ENCODE measurements at regions of chr22 and their contacts with region 1.

Region 1: GRCh38 chr22:30968924-30969539 is at the start of gene TUG1:
- DNase-seq: peak; percentile 88 to 98 (median 97)
- ATAC-seq: peak; percentile 96
- H3K4me3 ChIP-seq: peak within 1 kb of the TSS; percentile 59
- H3K4me3 Mint-ChIP-seq: peak within 1 kb of the TSS; percentile 90 to 96 (median 93)
- H3K27ac ChIP-seq: peak within 1 kb of the TSS; percentile 94
- H3K27ac Mint-ChIP-seq: peak within 1 kb of the TSS; percentile 90 to 98 (median 97)
- H3K4me1 ChIP-seq: peaks cover 22 to 23% of the 10 kb centered on the region in 2 donors
- H3K4me1 Mint-ChIP-seq: peaks cover 12 to 67% (median 58%) of the 10 kb centered on the region in 7 donors
- H3K27me3 ChIP-seq: no peaks in the 10 kb centered on the region
- H3K27me3 Mint-ChIP-seq: peaks cover 0 to 4% (median 0%) of the 10 kb centered on the region in 5 donors
- total RNA-seq, gene TUG1: 82.7 to 159 (median 113) TPM

Region 2: GRCh38 chr22:30435674-30436126 is 533.3 kb before region 1 on chr22:
- CTCF ChIA-PET with region 1: no interaction called
- POLR2A ChIA-PET with region 1: no interaction called
- intact Hi-C with region 1: loop called in 1 of 2 experiments (anchors 2 kb)
- DNase-seq: peak; percentile 45 to 97 (median 92)
- ATAC-seq: peak; percentile 94
- H3K4me3 ChIP-seq: peak overlapping the region; percentile 53
- H3K4me3 Mint-ChIP-seq: peak overlapping the region; percentile 57 to 90 (median 83)
- H3K27ac ChIP-seq: peak overlapping the region; percentile 99
- H3K27ac Mint-ChIP-seq: peak overlapping the region; percentile 88 to 100 (median 98)
- H3K4me1 ChIP-seq: peaks cover 16 to 21% of the 10 kb centered on the region in 2 donors
- H3K4me1 Mint-ChIP-seq: peaks cover 10 to 26% (median 23%) of the 10 kb centered on the region in 7 donors
- H3K27me3 ChIP-seq: peaks cover 3 to 6% of the 10 kb centered on the region in 2 donors
- H3K27me3 Mint-ChIP-seq: peaks cover 12 to 24% (median 18%) of the 10 kb centered on the region in 5 donors

Region 3: DNA sequence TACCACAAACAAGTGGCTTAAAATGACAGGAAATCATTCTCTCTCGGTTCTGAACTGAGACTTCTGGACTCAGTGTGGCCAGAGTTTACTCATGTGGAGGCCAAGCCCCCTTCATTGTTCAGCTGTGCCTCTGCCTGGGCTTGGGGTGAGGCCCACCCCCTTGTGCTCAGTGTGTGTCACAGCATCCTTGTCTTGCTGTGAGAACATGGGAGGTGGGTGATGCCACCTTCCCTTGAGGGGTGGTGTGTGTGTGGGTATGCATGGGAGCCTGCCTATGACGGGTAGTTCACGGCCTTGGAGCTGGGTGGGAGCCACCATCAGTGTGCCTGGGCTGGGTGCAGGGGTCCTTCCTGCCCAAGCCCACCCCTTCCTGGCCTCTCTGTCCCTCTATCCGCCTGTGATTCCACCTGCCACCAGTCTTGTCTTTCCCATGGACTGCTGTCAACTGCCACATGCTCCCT is 102.2 kb before region 1 on chr22:
- CTCF ChIA-PET with region 1: no interaction called
- POLR2A ChIA-PET with region 1: no interaction called
- intact Hi-C with region 1: no loop called
- DNase-seq: no peak
- ATAC-seq: no peak
- H3K4me3 ChIP-seq: no peak overlapping the region
- H3K4me3 Mint-ChIP-seq: no peak overlapping the region
- H3K27ac ChIP-seq: no peak overlapping the region
- H3K27ac Mint-ChIP-seq: no peak overlapping the region
- H3K4me1 ChIP-seq: no peaks in the 10 kb centered on the region
- H3K4me1 Mint-ChIP-seq: no peaks in the 10 kb centered on the region
- H3K27me3 ChIP-seq: no peaks in the 10 kb centered on the region
- H3K27me3 Mint-ChIP-seq: no peaks in the 10 kb centered on the region

Region 4: GRCh38 chr22:30920407-30920806 is 48.6 kb before region 1 on chr22:
- CTCF ChIA-PET with region 1: interaction called, 8 read pairs
- POLR2A ChIA-PET with region 1: interaction called, 28 read pairs
- intact Hi-C with region 1: loop called (anchors 1 kb)
- DNase-seq: peak; percentile 65 to 84 (median 78)
- ATAC-seq: peak; percentile 88
- H3K4me3 ChIP-seq: no peak overlapping the region
- H3K4me3 Mint-ChIP-seq: peak overlapping the region; percentile 62 to 89 (median 77)
- H3K27ac ChIP-seq: peak overlapping the region; percentile 43
- H3K27ac Mint-ChIP-seq: peak overlapping the region; percentile 5 to 90 (median 28)
- H3K4me1 ChIP-seq: peaks cover 6 to 16% of the 10 kb centered on the region in 2 donors
- H3K4me1 Mint-ChIP-seq: peaks cover 4 to 29% (median 21%) of the 10 kb centered on the region in 7 donors
- H3K27me3 ChIP-seq: no peaks in the 10 kb centered on the region
- H3K27me3 Mint-ChIP-seq: peaks cover 0 to 2% (median 0%) of the 10 kb centered on the region in 5 donors

Region 5: DNA sequence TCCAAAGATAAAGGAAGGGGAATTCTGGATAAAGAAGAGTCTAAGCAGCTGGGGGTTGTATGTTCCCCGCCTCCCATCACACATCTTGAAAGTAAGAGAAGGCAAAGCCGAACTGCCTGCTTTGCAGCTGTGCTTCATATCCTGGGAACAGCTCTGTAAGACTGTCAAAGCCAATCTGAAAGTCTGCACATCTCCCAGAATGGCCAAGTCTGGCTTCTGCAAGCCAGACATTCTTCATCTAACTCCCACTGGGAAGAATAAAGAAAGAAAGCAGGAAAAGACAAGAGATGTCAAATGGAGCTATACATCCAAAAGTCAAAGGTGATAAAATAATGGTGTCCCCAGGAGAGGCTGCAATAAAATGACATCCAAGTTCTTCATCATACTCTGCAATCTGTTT is 15.8 kb before region 1 on chr22:
- CTCF ChIA-PET with region 1: interaction called, 3 read pairs
- POLR2A ChIA-PET with region 1: interaction called, 66 read pairs
- intact Hi-C with region 1: loop called in 1 of 2 experiments (anchors 1 kb)
- DNase-seq: no peak
- ATAC-seq: no peak
- H3K4me3 ChIP-seq: no peak overlapping the region
- H3K4me3 Mint-ChIP-seq: peak overlapping the region in 3 of 10 donors; percentile 13 to 49 (median 42)
- H3K27ac ChIP-seq: no peak overlapping the region
- H3K27ac Mint-ChIP-seq: peak overlapping the region in 7 of 9 donors; percentile 21 to 98 (median 76)
- H3K4me1 ChIP-seq: peaks cover 0 to 75% of the 10 kb centered on the region in 2 donors
- H3K4me1 Mint-ChIP-seq: peaks cover 40 to 83% (median 75%) of the 10 kb centered on the region in 7 donors
- H3K27me3 ChIP-seq: no peaks in the 10 kb centered on the region
- H3K27me3 Mint-ChIP-seq: no peaks in the 10 kb centered on the region

Region 6: GRCh38 chr22:31160328-31160978 is 191.4 kb after region 1 on chr22:
- CTCF ChIA-PET with region 1: no interaction called
- POLR2A ChIA-PET with region 1: interaction called, 8 read pairs
- intact Hi-C with region 1: loop called (anchors 1 to 5 kb)
- DNase-seq: peak in 3 of 9 donors; percentile 5 to 26 (median 9)
- ATAC-seq: peak; percentile 47
- H3K4me3 ChIP-seq: peak overlapping the region; percentile 76
- H3K4me3 Mint-ChIP-seq: peak overlapping the region; percentile 87 to 100 (median 99)
- H3K27ac ChIP-seq: peak overlapping the region; percentile 74
- H3K27ac Mint-ChIP-seq: peak overlapping the region; percentile 91 to 100 (median 97)
- H3K4me1 ChIP-seq: peaks cover 12 to 17% of the 10 kb centered on the region in 2 donors
- H3K4me1 Mint-ChIP-seq: peaks cover 25 to 42% (median 35%) of the 10 kb centered on the region in 7 donors
- H3K27me3 ChIP-seq: no peaks in the 10 kb centered on the region
- H3K27me3 Mint-ChIP-seq: peaks cover 0 to 13% (median 0%) of the 10 kb centered on the region in 5 donors

Region 7: GRCh38 chr22:31496007-31496734 is 527.1 kb after region 1 on chr22 and contains the start of gene SFI1:
- CTCF ChIA-PET with region 1: no interaction called
- POLR2A ChIA-PET with region 1: no interaction called
- intact Hi-C with region 1: loop called (anchors 2 to 5 kb)
- DNase-seq: peak; percentile 91 to 98 (median 96)
- ATAC-seq: peak; percentile 93
- H3K4me3 ChIP-seq: peak within 1 kb of the TSS; percentile 83
- H3K4me3 Mint-ChIP-seq: peak within 1 kb of the TSS; percentile 85 to 99 (median 96)
- H3K27ac ChIP-seq: peak within 1 kb of the TSS; percentile 92
- H3K27ac Mint-ChIP-seq: peak within 1 kb of the TSS; percentile 92 to 99 (median 98)
- H3K4me1 ChIP-seq: peaks cover 18 to 20% of the 10 kb centered on the region in 2 donors
- H3K4me1 Mint-ChIP-seq: peaks cover 7 to 50% (median 43%) of the 10 kb centered on the region in 7 donors
- H3K27me3 ChIP-seq: no peaks in the 10 kb centered on the region
- H3K27me3 Mint-ChIP-seq: no peaks in the 10 kb centered on the region
- total RNA-seq, gene SFI1: 196 to 359 (median 343) TPM